Right cardiac atrium (tissue), 5 donors: ENCODE measurements at regions of chr3 and their contacts with region 1.

Region 1: DNA sequence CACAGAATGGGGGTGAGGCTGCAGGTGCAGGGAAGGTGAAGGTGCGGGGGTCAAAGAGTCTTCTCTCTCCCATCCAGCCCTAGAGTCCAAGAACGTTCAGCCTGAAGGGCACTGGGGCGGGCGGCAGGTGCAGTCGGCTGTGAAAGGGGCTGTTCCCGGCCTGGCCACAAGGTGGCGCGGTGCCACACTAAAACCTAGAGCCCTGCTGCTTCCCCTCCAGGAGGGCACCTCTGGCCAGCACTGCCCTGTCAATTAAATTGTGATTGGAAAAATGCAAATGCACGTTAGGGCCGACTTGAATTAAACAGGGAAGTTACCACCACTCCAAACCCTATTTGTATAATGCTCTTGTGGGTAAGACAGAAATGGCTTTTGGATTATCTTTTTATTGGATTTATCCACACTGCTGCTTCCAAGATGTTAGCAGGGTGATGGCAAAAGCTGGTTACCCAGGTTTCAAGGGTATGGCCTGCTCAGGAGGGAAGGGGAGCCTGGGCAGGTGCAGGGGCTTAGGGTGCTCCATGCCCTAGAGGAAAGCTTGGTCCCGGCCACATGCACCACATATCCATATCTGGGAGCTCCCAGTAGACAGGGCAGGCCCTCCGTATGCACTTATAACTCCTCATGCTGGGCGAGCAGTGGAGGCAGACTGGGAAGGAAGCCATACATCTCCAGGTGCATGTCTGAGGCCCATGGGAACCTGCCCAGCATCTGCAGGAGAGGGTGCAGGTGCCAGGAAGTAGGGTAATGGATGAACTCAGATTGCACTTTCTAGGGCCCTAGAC is 119.8 kb downstream of the ADCY5 start:
- DNase-seq: peak; percentile 71 to 92 (median 92)
- ATAC-seq: peak; percentile 58 to 63
- H3K4me3 ChIP-seq: no peak overlapping the region
- H3K27ac ChIP-seq: peak overlapping the region; percentile 33
- H3K4me1 ChIP-seq: peaks cover 5% of the 10 kb centered on the region
- H3K27me3 ChIP-seq: no peaks in the 10 kb centered on the region

Region 2: GRCh38 chr3:123365450-123366143 is 36.6 kb after region 1 on chr3:
- intact Hi-C with region 1: no loop called
- DNase-seq: no peak
- ATAC-seq: peak; percentile 39 to 48
- H3K4me3 ChIP-seq: no peak overlapping the region
- H3K27ac ChIP-seq: peak overlapping the region; percentile 74
- H3K4me1 ChIP-seq: peaks cover 10% of the 10 kb centered on the region
- H3K27me3 ChIP-seq: no peaks in the 10 kb centered on the region

Region 3: DNA sequence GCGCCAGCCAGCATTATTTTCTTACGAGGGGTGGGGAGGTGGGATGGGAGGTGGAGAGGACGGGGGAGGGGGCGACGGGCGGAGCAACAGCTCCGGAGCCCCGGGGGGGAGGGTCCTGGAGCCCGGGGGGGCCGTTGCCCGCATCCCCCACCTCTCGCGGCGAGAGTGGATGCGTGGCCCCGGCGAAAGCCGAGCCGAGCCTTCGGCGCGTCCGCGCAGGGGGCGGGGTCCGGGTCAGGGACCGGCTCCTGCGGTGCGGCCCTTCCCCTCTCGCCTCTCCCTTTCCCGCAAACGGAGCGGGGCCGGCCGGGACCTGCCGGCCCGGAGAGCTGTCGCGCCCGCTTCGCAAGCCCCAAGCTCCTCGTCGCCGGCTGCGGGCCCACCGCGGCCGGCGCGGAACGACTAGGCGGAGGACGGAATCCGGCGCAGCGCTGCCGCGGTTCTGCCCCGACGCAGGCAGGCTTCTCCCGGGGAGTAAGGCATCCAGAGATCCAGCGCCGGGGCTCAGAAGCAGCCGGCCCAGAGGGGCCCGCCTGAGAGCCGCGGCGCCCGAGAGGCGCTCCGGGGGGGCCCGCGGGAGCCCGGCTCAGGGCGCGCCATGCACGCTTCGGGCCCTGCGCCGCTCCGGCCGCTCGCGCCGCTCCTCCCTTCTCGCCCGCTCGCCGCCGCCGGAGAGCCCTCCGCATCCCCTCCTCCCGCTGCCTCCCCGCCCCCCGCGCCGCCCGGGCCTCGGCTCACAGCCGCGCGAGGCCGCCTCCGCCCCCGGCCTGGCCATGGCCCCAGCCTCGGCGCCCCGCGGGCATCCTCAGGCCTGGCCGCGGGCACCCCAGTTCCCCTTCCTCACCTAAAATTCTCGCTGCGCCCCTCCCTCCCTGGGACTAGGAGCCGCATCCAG is 120.3 kb after region 1 on chr3:
- intact Hi-C with region 1: loop called in 3 of 4 experiments (anchors 5 to 10 kb)
- DNase-seq: peak; percentile 47 to 76 (median 75)
- ATAC-seq: peak; percentile 59 to 65
- H3K4me3 ChIP-seq: peak overlapping the region; percentile 92
- H3K27ac ChIP-seq: peak overlapping the region; percentile 87
- H3K4me1 ChIP-seq: no peaks in the 10 kb centered on the region
- H3K27me3 ChIP-seq: no peaks in the 10 kb centered on the region

Region 4: GRCh38 chr3:123489400-123490004 is 160.5 kb after region 1 on chr3:
- intact Hi-C with region 1: loop called (anchors 2 to 5 kb)
- DNase-seq: peak; percentile 65 to 85 (median 84)
- ATAC-seq: peak; percentile 77 to 79
- H3K4me3 ChIP-seq: no peak overlapping the region
- H3K27ac ChIP-seq: peak overlapping the region; percentile 66
- H3K4me1 ChIP-seq: no peaks in the 10 kb centered on the region
- H3K27me3 ChIP-seq: no peaks in the 10 kb centered on the region

Region 5: GRCh38 chr3:123559040-123559861 is 230.2 kb after region 1 on chr3:
- intact Hi-C with region 1: loop called (anchors 5 to 10 kb)
- DNase-seq: no peak
- ATAC-seq: peak in 1 of 2 donors; percentile 34
- H3K4me3 ChIP-seq: no peak overlapping the region
- H3K27ac ChIP-seq: no peak overlapping the region
- H3K4me1 ChIP-seq: no peaks in the 10 kb centered on the region
- H3K27me3 ChIP-seq: no peaks in the 10 kb centered on the region